ENCODE measurements at regions of chr12 and their contacts with region 1.

Region 1: GRCh38 chr12:65192963-65193516 is 23.7 kb downstream of the LEMD3 start:
- DNase-seq: no peak
- ATAC-seq: peak in 1 of 4 donors; percentile 10
- H3K4me3 ChIP-seq: no peak overlapping the region
- H3K27ac ChIP-seq: no peak overlapping the region
- H3K4me1 ChIP-seq: peaks cover 0 to 40% (median 17%) of the 10 kb centered on the region in 12 donors
- H3K27me3 ChIP-seq: no peaks in the 10 kb centered on the region
- CTCF ChIP-seq: no peak
- POLR2A ChIP-seq: no peak

Region 2: DNA sequence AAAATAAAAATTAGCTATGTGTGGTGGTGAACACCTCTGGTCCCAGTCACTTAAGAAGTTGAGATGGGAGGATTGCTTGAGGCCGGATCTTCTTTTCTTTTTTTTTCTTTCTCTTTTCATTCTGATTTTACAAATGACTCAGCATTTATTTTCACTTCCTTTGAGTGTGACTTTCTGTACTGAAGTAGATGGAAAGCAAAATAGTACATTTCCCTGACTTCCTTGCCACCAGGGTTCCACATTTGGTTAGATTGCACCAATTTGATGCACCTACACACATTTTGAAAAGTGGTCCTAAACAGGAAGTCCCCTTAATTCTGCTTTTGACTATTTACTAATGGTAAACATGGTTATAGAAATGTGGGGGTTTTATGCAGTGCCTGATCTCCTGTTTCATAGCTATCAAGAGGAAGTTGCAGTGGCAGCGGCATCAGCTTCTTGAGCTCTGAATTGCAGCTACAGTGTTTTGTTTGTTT is 36.6 kb before region 1 on chr12:
- intact Hi-C with region 1: no loop called
- DNase-seq: no peak
- ATAC-seq: no peak
- H3K4me3 ChIP-seq: peak overlapping the region in 1 of 12 donors; percentile 32
- H3K27ac ChIP-seq: peak overlapping the region in 1 of 12 donors; percentile 86
- H3K4me1 ChIP-seq: peaks cover 0 to 15% (median 0%) of the 10 kb centered on the region in 12 donors
- H3K27me3 ChIP-seq: peaks cover 0 to 8% (median 0%) of the 10 kb centered on the region in 9 donors
- CTCF ChIP-seq: no peak
- POLR2A ChIP-seq: no peak

Region 3: GRCh38 chr12:65495233-65495632 is 302.2 kb after region 1 on chr12:
- intact Hi-C with region 1: no loop called
- DNase-seq: no peak
- ATAC-seq: no peak
- H3K4me3 ChIP-seq: no peak overlapping the region
- H3K27ac ChIP-seq: no peak overlapping the region
- H3K4me1 ChIP-seq: peaks cover 0 to 9% (median 0%) of the 10 kb centered on the region in 12 donors
- H3K27me3 ChIP-seq: no peaks in the 10 kb centered on the region
- CTCF ChIP-seq: no peak
- POLR2A ChIP-seq: no peak

Region 4: GRCh38 chr12:65948320-65949008 is 755.4 kb after region 1 on chr12:
- intact Hi-C with region 1: loop called in 1 of 10 experiments (anchors 10 kb)
- DNase-seq: peak; percentile 53 to 76 (median 73)
- ATAC-seq: peak; percentile 55 to 94 (median 78)
- H3K4me3 ChIP-seq: peak overlapping the region in 4 of 12 donors; percentile 6 to 20 (median 16)
- H3K27ac ChIP-seq: no peak overlapping the region
- H3K4me1 ChIP-seq: peaks cover 0 to 18% (median 9%) of the 10 kb centered on the region in 12 donors
- H3K27me3 ChIP-seq: peaks cover 0 to 5% (median 0%) of the 10 kb centered on the region in 9 donors
- CTCF ChIP-seq: no peak
- POLR2A ChIP-seq: no peak

Measured in heart left ventricle (tissue), 16 donors.